Activated T-helper 2 cell treated with anti-CD3 and anti-CD28 coated beads, Interferon-gamma antibody, Interleukin-2, Interleukin-4, amounts not matched to agents 10 μg/mL and 5 μg/mL and 100 μg/mL, durations not matched to agents 14 hours and 24 hours and 36 hours (primary cell): ENCODE measurements at regions of chr5 and their contacts with region 1.

Region 1: GRCh38 chr5:73454351-73455036 is 5.9 kb upstream of the FOXD1 start:
- DNase-seq: no peak
- H3K4me3 Mint-ChIP-seq: no peak overlapping the region
- H3K27ac Mint-ChIP-seq: no peak overlapping the region
- H3K4me1 Mint-ChIP-seq: peaks cover 2% of the 10 kb centered on the region
- H3K27me3 Mint-ChIP-seq: peaks cover 49% of the 10 kb centered on the region

Region 2: GRCh38 chr5:73215891-73216610 is 238.4 kb before region 1 on chr5:
- intact Hi-C with region 1: loop called (anchors 5 kb)
- DNase-seq: peak; percentile 28
- H3K4me3 Mint-ChIP-seq: no peak overlapping the region
- H3K27ac Mint-ChIP-seq: no peak overlapping the region
- H3K4me1 Mint-ChIP-seq: peaks cover 3% of the 10 kb centered on the region
- H3K27me3 Mint-ChIP-seq: peaks cover 74% of the 10 kb centered on the region